Gastrocnemius medialis (tissue), 4 donors: ENCODE measurements at regions of chrX and their contacts with region 1.

Region 1: DNA sequence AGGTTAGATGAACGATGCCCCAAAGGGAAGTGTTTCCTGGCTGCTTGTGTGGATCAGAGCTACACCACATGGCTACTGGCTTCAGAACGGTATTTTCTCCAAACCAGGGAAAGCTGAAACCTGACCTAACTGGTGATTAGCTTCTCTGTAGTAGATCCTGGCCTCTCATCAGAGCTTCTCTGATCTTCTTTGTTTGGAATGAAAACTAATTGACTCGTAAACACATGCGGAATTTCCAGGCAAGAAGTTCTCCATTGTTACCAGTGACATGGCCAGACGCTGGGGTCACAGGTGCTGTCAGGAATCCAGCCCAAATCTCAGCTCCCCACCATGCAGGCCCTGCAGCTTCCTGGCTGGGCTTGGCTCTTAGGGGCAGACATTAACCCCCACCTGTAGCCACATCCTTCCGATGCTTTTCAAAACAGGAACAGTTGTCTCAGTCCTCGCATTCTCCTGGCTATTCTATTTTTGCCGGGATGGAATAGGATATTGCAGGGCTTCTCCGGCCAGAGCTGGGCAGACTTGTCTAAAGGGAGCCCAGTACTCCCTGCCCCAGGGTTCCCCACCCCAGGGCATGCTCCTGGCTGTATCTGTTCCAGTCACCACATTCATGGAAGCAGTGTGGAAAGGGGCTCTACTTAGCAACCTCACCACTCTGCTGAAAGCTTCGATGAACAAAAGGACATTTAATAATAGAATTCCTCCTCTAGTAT is 305.4 kb upstream of the F9 start:
- DNase-seq: peak in 1 of 2 donors; percentile 33
- ATAC-seq: peak; percentile 34 to 47
- H3K4me3 ChIP-seq: peak overlapping the region in 3 of 4 donors; percentile 2 to 9 (median 4)
- H3K27ac ChIP-seq: peak overlapping the region; percentile 47 to 84 (median 70)
- H3K4me1 ChIP-seq: peaks cover 0 to 10% of the 10 kb centered on the region in 2 donors
- H3K27me3 ChIP-seq: no peaks in the 10 kb centered on the region
- CTCF ChIP-seq: no peak
- POLR2A ChIP-seq: no peak

Region 2: DNA sequence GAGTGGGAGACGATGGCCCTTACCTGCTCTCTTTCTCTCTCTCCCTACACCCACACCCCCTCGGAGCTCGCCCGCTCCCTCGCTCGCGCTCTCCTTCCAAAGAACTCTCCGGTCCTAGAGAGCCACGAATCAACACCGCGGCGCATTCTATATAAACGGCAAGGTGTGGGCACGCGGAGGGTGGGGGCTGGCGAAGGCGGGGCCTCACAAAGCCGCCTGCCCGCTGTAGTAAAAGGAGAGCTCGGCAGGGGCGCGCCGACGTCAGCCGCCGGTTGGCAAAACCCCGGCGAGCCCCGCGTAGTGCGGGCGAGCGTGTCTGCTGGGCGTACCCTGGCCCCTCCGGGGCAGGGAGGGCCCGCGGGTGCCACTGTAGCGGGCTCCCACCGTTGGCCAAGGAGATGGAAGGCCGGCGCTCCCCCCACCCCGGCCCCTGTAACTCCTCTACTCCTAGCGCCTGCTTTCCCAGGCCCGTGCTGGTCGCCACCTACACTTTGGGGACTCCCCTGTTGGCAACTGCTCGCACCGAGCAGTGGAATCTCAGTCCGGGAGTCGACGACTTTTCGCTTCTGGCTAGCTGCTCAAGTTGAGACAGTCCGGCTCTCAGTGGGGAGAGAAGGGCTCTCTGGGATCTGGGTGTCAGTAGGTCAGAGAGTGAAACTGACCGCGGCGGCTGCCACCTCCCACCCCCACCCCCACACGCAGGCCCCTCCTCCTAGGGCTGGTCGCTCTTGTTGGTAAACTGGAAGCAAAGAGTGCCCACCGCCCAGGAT is 20.0 kb before region 1 on chrX:
- in situ Hi-C with region 1: no loop called
- intact Hi-C with region 1: no loop called
- DNase-seq: peak; percentile 52 to 84
- ATAC-seq: peak; percentile 64 to 78
- H3K4me3 ChIP-seq: peak overlapping the region; percentile 62 to 70 (median 64)
- H3K27ac ChIP-seq: peak overlapping the region; percentile 83 to 93 (median 86)
- H3K4me1 ChIP-seq: peaks cover 15 to 18% of the 10 kb centered on the region in 2 donors
- H3K27me3 ChIP-seq: no peaks in the 10 kb centered on the region
- CTCF ChIP-seq: peak in 1 of 5 experiments; percentile 27
- POLR2A ChIP-seq: peak; percentile 84 to 85

Region 3: GRCh38 chrX:139290310-139290709 is 65.2 kb after region 1 on chrX:
- in situ Hi-C with region 1: loop called in 1 of 4 experiments (anchors 10 kb)
- intact Hi-C with region 1: no loop called
- DNase-seq: no peak
- ATAC-seq: no peak
- H3K4me3 ChIP-seq: no peak overlapping the region
- H3K27ac ChIP-seq: no peak overlapping the region
- H3K4me1 ChIP-seq: peaks cover 5 to 6% of the 10 kb centered on the region in 2 donors
- H3K27me3 ChIP-seq: no peaks in the 10 kb centered on the region
- CTCF ChIP-seq: no peak
- POLR2A ChIP-seq: no peak

Region 4: DNA sequence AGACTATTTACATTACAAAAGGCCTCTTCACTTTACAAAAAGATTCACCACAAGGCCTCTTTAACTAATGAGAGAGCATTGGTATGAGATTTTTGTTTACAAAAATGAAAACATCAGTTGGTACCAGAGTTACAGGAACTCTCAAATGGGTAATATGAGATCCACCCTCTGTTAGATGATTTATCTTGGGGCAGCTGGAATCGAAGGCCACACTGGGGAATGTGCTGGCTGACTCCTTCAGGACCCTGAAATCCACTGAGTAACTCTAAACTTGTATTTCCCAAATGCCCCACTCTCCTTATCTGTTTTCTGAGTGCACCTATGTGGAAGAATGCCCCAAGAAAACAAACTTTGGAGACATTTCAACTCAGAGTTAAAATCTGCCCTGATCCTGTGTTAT is 72.5 kb after region 1 on chrX:
- in situ Hi-C with region 1: loop called in 1 of 4 experiments (anchors 10 kb)
- intact Hi-C with region 1: loop called (anchors 2 kb)
- DNase-seq: peak in 1 of 2 donors; percentile 12
- ATAC-seq: no peak
- H3K4me3 ChIP-seq: no peak overlapping the region
- H3K27ac ChIP-seq: no peak overlapping the region
- H3K4me1 ChIP-seq: peaks cover 0 to 16% of the 10 kb centered on the region in 2 donors
- H3K27me3 ChIP-seq: no peaks in the 10 kb centered on the region
- CTCF ChIP-seq: no peak
- POLR2A ChIP-seq: no peak